ENCODE measurements at regions of chr22 and their contacts with region 1.

Region 1: DNA sequence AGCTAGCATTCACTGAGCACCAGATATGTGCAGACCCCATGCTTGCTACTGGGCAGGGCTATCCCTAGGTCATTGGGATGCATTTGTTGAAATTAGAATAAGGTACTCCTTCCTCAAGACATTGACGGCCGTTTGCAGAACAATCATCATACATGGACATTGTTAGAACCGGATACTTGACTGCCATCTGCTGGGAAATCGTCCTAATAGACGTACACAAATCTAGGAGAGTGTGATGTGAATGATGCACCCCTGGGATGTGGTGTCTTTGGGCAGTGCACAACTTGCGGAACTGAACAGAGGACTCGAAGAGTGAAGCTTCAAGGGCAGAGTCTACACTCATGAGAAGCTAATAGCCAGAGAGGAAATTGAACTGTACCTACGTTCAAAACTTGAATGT is 35.9 kb downstream of the MYO18B start:
- DNase-seq: peak; percentile 8
- H3K4me3 Mint-ChIP-seq: no peak overlapping the region
- H3K27ac Mint-ChIP-seq: no peak overlapping the region
- H3K4me1 Mint-ChIP-seq: peaks cover 4% of the 10 kb centered on the region
- H3K27me3 Mint-ChIP-seq: no peaks in the 10 kb centered on the region

Region 2: GRCh38 chr22:25219948-25220442 is 557.9 kb before region 1 on chr22:
- intact Hi-C with region 1: loop called (anchors 10 kb)
- DNase-seq: no peak
- H3K4me3 Mint-ChIP-seq: no peak overlapping the region
- H3K27ac Mint-ChIP-seq: no peak overlapping the region
- H3K4me1 Mint-ChIP-seq: no peaks in the 10 kb centered on the region
- H3K27me3 Mint-ChIP-seq: peaks cover 11% of the 10 kb centered on the region

Region 3: GRCh38 chr22:25759825-25760231 is 18.0 kb before region 1 on chr22:
- intact Hi-C with region 1: no loop called
- DNase-seq: no peak
- H3K4me3 Mint-ChIP-seq: no peak overlapping the region
- H3K27ac Mint-ChIP-seq: no peak overlapping the region
- H3K4me1 Mint-ChIP-seq: peaks cover 28% of the 10 kb centered on the region
- H3K27me3 Mint-ChIP-seq: no peaks in the 10 kb centered on the region

Measured in activated T-helper 1 cell treated with anti-CD3 and anti-CD28 coated beads, Interleukin-12 subunit alpha, Interleukin-12 subunit beta, Interleukin-2, Interleukin-4 antibody, amounts not matched to agents 30 ng/mL and 10 ng/mL and 1 ng/mL, durations not matched to agents 14 hours and 24 hours and 36 hours (primary cell).